A673 (cell line): ENCODE measurements at regions of chr14 and their contacts with region 1.

Region 1: DNA sequence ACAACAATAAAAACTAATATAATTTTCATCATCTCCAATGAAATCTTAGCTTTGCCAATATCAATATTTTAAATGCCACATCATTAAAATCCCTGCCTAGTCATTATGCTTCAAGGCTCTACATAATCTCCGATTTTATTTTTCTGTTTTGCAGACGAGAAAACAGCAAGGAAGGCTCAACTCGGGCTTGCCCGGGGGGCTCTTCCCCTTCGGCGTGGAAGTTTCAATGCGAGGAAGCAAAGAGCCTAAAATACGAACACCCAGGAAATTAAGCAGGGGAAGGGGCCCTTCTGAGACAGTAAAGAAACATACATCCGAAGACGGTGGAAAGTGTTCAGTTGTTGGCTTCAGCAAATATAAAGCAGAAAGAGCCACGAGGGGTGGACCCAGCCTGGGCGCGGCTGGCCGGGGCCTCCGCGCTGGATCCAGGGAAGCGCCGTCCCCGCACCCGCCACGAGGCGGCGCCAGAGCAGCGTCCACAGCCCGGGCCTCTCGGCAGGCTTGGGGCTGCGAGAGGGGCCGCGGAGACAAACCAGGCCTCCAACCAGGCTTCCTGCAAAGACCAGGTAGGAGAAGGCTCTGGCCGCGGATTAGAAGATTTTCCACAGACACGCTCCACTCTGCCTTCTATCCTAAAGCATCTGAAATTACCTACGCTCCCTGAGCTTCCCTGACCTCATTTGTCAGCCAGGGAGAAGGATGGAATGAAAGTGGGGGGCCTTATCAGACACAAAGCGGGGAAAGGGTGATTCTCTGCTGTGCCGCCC is 77.2 kb downstream of the SERPINA3 start:
- DNase-seq: peak; percentile 77
- H3K4me3 ChIP-seq: no peak overlapping the region
- H3K27ac ChIP-seq: no peak overlapping the region
- H3K4me1 ChIP-seq: peaks cover 10% of the 10 kb centered on the region
- H3K27me3 ChIP-seq: no peaks in the 10 kb centered on the region
- CTCF ChIP-seq: peak; percentile 96

Region 2: DNA sequence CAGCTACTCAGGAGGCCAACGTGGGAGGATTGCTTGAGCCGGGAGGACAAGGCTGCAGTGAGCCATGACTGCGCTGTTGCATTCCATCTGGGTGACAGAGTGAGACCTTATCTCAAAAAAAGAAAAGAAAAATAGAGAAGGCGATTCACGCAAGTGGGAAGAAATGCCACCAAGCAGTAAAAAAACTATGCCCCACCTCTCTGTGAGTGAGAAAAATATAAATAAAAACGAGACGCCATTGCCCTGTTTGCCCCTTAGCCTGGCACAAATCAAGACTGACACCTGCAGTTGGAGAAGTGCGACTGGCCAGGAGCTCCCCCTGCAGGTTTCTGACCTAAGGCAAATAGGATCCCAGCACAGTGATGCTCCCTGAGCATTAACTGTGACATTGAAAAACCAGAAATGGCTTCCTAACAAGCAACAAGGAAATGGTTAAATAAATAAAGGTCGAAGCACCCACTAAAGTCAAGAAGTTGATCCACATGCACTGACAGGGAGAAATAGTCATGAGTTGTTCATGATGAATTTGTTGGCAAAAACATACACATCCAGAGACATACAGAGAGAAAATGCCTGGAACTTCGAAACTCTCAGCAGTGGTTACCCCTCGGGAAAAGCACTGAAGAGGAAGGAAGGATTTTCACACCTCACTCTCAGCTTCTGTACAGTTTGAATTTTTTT is 59.4 kb after region 1 on chr14:
- CTCF ChIA-PET with region 1: interaction called, 4 read pairs
- POLR2A ChIA-PET with region 1: no interaction called
- intact Hi-C with region 1: loop called (anchors 1 kb)
- DNase-seq: peak; percentile 44
- H3K4me3 ChIP-seq: no peak overlapping the region
- H3K27ac ChIP-seq: no peak overlapping the region
- H3K4me1 ChIP-seq: no peaks in the 10 kb centered on the region
- H3K27me3 ChIP-seq: no peaks in the 10 kb centered on the region
- CTCF ChIP-seq: peak; percentile 76

Region 3: DNA sequence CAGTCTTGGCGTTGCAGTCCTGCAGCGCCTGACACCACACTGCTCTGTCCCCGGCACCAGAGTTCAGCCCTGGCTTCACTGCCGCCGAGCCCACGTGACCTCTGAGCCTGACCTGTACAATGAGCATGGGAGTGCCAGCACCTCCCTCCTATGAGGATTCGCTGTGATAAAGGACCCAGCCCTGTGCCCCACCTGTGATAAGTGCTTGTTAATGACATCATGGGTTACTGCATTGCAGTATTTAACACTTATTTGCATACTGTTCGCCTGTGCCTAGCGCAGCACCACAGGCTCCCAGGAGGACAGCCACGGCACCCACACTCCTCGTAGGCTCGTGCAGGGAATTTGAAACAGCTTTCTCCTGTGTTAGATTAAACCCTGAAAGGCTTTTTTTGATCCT is 198.7 kb after region 1 on chr14:
- CTCF ChIA-PET with region 1: no interaction called
- POLR2A ChIA-PET with region 1: no interaction called
- intact Hi-C with region 1: loop called (anchors 10 kb)
- DNase-seq: peak; percentile 39
- H3K4me3 ChIP-seq: peak overlapping the region; percentile 15
- H3K27ac ChIP-seq: peak overlapping the region; percentile 80
- H3K4me1 ChIP-seq: peaks cover 29% of the 10 kb centered on the region
- H3K27me3 ChIP-seq: no peaks in the 10 kb centered on the region
- CTCF ChIP-seq: no peak

Region 4: DNA sequence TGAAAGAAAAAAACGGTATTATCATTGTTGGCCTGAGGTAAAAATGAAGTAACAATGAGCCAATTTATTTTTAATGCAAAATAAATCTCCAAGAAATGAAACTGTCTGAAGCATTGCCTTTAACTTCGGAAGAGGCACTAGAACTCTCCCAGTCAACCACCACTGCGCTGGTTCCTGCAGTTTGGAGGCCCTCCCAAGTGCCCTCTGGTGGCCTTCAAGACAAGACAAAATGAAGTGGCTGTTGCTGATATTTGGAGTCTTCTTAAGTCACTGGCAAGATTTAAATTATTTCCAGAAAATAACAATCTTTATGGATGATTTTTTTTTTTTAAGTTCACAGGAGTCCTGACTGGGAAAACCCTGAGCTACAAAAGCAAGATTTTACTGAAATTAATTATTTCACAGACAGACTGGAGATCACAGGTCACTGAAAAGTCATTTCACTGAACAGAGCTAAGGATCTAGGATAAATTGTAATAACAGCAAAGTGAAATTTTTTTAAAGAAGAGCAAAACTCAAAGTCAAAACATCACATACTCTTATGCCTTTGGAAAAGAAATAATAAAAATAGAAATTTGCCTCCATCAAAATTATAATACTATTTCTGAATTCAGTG is 409.7 kb after region 1 on chr14:
- CTCF ChIA-PET with region 1: no interaction called
- POLR2A ChIA-PET with region 1: no interaction called
- intact Hi-C with region 1: loop called (anchors 1 kb)
- DNase-seq: peak; percentile 86
- H3K4me3 ChIP-seq: no peak overlapping the region
- H3K27ac ChIP-seq: no peak overlapping the region
- H3K4me1 ChIP-seq: peaks cover 52% of the 10 kb centered on the region
- H3K27me3 ChIP-seq: no peaks in the 10 kb centered on the region
- CTCF ChIP-seq: peak; percentile 89

Region 5: DNA sequence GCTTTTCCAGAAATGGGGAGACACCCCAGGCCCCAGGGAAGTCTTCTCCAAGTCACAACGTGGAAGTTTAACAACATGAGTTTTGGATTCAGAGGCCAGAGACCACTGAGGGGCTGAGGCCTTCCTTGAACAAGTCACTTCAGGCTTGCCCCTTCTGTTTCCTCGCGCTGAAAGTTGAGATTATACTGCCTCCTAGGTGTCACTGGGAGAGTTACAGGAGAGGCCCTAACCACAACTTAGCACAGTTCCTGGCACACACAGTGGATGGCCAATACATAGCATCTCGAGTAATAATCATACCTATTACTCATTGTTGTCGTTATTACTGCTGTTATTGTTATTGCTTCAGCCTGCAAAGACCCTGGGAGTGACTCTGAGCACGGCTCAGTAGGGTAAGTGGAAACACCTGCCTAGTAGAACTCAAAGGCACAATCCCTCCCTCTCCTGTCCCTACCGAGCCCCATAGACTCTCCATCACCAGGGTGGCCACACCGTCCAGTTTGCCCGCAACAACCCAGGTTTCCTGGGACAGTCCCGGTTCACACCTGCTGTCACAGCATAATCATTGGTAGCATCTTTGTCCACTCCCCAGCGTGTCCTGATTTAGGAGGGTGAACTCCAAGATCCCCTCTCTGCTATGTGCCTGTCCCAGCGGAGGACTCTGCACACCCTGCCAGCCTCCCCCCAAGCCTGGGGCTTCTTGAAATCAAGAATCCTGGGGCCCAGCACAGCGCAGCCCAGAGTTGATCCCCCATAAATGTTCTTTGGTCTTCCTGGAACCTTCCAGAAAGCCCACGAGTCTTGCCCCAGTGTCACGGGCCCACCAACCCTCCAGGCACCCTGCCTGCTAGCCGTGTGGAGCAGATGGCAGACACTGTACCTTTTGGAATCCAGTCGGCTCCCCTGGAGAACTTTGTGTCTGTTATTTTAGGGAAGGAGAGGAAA is 742.1 kb after region 1 on chr14:
- CTCF ChIA-PET with region 1: no interaction called
- POLR2A ChIA-PET with region 1: no interaction called
- intact Hi-C with region 1: loop called (anchors 5 kb)
- DNase-seq: peak; percentile 60
- H3K4me3 ChIP-seq: no peak overlapping the region
- H3K27ac ChIP-seq: no peak overlapping the region
- H3K4me1 ChIP-seq: no peaks in the 10 kb centered on the region
- H3K27me3 ChIP-seq: no peaks in the 10 kb centered on the region
- CTCF ChIP-seq: peak; percentile 71